Activated CD4-positive, alpha-beta memory T cell treated with anti-CD3 and anti-CD28 coated beads for 36 hours (primary cell): ENCODE measurements at regions of chr2 and their contacts with region 1.

Region 1: DNA sequence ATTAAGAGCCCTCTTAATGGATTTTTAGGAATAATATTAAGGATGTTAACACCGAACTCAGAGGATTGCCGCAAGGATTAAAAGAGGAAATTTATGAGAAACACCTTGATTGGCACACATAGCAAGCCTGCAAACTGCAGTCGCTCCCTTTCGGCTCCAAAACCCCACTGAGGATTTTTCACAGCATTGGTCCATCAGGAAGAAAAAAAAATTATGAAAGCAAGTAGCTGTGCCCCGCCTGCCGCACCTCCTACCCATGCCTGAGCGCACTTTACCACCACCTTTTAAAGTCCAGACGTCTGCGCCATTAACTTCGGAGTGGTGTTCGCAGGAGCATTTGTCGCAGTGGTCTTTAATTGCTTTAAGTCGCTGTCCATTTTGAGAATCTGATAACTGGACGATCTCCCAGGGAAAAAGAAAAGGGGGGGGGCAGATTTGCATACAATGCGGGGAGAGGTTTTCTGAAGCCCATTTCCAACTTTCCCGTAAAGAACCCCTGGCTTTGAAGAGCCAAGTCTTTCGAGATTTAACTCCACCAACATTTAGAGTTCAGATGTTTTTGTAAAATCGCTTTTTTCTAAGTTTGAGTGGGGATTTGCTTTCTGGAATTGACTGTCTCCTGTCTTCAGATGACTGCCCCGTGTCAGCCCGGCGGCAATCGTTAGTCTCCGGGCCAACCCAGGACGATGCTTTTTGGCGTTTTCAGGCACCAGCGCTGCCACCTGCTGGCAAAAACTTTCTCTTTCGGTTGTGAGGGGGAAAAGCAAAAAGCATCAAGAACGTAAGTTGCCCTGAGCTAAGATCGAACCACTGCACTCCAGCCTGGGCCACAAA is 914 bp upstream of the TRABD2A start:
- DNase-seq: peak; percentile 95
- H3K4me3 Mint-ChIP-seq: peak overlapping the region; percentile 94
- H3K27ac Mint-ChIP-seq: peak overlapping the region; percentile 99
- H3K4me1 Mint-ChIP-seq: peaks cover 44% of the 10 kb centered on the region
- H3K27me3 Mint-ChIP-seq: no peaks in the 10 kb centered on the region

Region 2: DNA sequence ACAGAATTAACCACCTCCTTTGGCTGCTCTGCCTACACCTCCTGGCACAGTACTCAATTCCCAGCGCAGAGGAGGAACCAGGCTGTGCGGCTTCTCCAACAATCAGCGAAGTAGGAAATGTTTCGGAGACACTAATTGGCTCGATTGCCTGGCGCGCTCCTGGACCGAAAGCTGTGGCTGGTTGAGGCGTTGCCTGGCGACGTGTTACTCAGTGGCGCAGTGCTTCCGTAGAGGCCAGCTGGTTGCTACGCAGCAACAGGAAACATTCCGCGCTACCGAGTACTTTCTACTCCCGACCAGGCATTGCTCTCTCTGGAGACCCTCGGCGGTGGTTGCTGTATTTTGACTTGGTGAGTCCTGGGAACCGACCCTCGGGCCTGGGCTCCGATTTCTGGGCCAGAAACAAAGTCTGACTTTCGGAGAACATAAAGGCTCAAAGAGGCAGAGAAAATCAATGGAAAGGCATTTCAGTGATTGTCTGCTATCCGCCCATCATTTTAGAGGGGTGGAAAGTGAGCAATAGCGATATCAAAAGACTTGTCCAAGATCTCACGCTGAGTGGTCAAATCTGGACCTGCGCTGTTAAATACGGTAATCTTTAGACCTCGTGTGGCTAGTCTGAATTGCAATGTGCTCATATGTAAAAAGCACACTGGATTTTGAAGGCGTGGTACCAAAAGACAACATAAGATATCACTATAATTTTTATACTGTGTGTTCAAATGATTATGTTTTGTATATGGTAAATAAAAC is 365.4 kb before region 1 on chr2 and contains the start of gene DNAH6:
- CTCF ChIA-PET with region 1: interaction called, 3 read pairs
- POLR2A ChIA-PET with region 1: interaction called, 3 read pairs
- intact Hi-C with region 1: loop called (anchors 5 kb)
- DNase-seq: peak; percentile 92
- H3K4me3 Mint-ChIP-seq: peak within 1 kb of the TSS; percentile 84
- H3K27ac Mint-ChIP-seq: no peak within 1 kb of the TSS
- H3K4me1 Mint-ChIP-seq: peaks cover 23% of the 10 kb centered on the region
- H3K27me3 Mint-ChIP-seq: no peaks in the 10 kb centered on the region
- total RNA-seq, gene DNAH6: 0.33 to 0.85 TPM

Region 3: DNA sequence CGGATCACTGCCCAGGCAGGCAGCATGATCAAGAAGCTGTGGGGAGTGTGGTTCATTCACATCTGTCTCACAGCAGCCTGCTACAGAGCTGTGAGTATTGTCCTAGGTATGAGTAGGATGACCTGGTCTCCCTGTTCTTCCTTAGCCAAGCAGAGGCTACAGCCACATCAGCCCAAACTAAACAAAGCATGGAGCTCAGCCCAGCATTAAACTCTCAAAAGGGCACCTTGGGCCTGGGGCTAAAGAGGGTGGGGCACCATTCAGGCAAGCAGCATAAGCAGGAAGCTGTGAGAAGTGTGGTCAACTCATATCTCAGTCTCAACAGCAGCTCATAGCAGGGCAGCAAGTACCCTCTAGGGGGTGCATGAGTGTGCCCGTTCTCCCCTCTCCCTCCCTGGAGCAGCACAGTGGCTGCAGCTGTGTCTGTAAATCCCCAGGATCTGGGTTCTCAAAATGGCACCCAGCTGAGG is 140.5 kb before region 1 on chr2:
- CTCF ChIA-PET with region 1: interaction called, 8 read pairs
- POLR2A ChIA-PET with region 1: no interaction called
- intact Hi-C with region 1: loop called (anchors 2 kb)
- DNase-seq: peak; percentile 75
- H3K4me3 Mint-ChIP-seq: no peak overlapping the region
- H3K27ac Mint-ChIP-seq: no peak overlapping the region
- H3K4me1 Mint-ChIP-seq: peaks cover 10% of the 10 kb centered on the region
- H3K27me3 Mint-ChIP-seq: no peaks in the 10 kb centered on the region

Region 4: GRCh38 chr2:84832772-84833461 is 48.9 kb before region 1 on chr2:
- CTCF ChIA-PET with region 1: no interaction called
- POLR2A ChIA-PET with region 1: interaction called, 3 read pairs
- intact Hi-C with region 1: loop called (anchors 1 kb)
- DNase-seq: peak; percentile 48
- H3K4me3 Mint-ChIP-seq: peak overlapping the region; percentile 63
- H3K27ac Mint-ChIP-seq: peak overlapping the region; percentile 79
- H3K4me1 Mint-ChIP-seq: peaks cover 45% of the 10 kb centered on the region
- H3K27me3 Mint-ChIP-seq: no peaks in the 10 kb centered on the region

Region 5: DNA sequence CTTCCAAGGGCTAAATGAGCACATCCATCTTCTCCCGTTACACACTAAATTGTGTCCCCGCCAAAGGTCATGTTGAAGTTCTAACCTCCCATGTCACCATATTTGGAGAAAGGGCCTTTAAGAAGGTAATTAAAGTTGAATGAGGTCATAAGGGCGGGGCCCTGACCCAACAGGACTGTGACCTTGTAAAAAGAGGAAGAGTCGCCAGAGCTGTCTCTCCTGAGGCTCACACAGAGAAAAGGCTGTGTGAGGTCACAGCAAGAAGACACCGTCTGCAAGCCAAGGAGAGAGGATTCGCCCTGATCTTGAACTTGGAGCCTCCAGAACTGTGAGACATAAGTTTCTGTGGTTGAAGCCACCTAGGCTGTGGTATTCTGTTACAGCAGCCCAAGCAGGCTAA is 25.0 kb before region 1 on chr2:
- CTCF ChIA-PET with region 1: interaction called, 6 read pairs
- POLR2A ChIA-PET with region 1: interaction called, 3 read pairs
- intact Hi-C with region 1: loop called (anchors 2 kb)
- DNase-seq: peak; percentile 66
- H3K4me3 Mint-ChIP-seq: no peak overlapping the region
- H3K27ac Mint-ChIP-seq: peak overlapping the region; percentile 46
- H3K4me1 Mint-ChIP-seq: peaks cover 91% of the 10 kb centered on the region
- H3K27me3 Mint-ChIP-seq: no peaks in the 10 kb centered on the region

Region 6: DNA sequence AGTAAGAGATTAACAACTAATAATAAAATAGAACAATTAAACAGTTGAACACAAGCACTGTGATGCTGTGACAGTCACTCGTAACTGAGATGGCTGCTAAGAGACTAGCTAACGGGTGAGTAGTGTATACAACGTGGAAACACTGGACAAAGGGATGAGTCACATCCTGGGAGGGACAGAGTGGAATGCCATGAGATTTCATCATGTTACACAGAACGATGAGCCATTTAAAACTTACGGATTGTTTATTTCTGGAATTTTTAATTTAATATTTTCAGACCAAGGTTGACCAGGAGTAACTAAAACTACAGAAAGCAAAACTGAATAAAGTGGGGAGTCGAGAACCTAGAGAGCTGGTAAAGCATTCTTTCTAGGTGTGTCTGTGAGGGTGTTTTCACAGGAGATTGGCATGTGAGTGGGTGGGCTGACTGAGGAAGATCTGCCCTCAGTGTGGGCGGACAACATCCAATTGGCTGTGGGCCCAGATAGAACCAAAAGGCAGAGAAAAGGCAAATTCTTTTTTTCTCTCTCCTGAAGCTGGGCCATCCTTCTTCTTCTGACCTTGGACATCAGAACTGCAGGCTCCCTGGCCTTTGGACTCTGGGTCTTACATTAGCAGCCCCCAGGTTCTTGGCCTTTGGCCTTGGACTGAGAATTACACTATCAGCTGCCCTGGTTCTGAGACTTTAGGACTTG is 38.2 kb after region 1 on chr2:
- CTCF ChIA-PET with region 1: interaction called, 119 read pairs
- POLR2A ChIA-PET with region 1: interaction called, 18 read pairs
- intact Hi-C with region 1: loop called (anchors 1 kb)
- DNase-seq: peak; percentile 74
- H3K4me3 Mint-ChIP-seq: peak overlapping the region; percentile 37
- H3K27ac Mint-ChIP-seq: peak overlapping the region; percentile 82
- H3K4me1 Mint-ChIP-seq: peaks cover 39% of the 10 kb centered on the region
- H3K27me3 Mint-ChIP-seq: no peaks in the 10 kb centered on the region

Region 7: GRCh38 chr2:85009019-85009618 is 127.3 kb after region 1 on chr2:
- CTCF ChIA-PET with region 1: no interaction called
- POLR2A ChIA-PET with region 1: no interaction called
- intact Hi-C with region 1: no loop called
- DNase-seq: no peak
- H3K4me3 Mint-ChIP-seq: no peak overlapping the region
- H3K27ac Mint-ChIP-seq: peak overlapping the region; percentile 83
- H3K4me1 Mint-ChIP-seq: peaks cover 71% of the 10 kb centered on the region
- H3K27me3 Mint-ChIP-seq: no peaks in the 10 kb centered on the region